GM10248 (cell line): ENCODE measurements at regions of chr1 and their contacts with region 1.

Region 1: DNA sequence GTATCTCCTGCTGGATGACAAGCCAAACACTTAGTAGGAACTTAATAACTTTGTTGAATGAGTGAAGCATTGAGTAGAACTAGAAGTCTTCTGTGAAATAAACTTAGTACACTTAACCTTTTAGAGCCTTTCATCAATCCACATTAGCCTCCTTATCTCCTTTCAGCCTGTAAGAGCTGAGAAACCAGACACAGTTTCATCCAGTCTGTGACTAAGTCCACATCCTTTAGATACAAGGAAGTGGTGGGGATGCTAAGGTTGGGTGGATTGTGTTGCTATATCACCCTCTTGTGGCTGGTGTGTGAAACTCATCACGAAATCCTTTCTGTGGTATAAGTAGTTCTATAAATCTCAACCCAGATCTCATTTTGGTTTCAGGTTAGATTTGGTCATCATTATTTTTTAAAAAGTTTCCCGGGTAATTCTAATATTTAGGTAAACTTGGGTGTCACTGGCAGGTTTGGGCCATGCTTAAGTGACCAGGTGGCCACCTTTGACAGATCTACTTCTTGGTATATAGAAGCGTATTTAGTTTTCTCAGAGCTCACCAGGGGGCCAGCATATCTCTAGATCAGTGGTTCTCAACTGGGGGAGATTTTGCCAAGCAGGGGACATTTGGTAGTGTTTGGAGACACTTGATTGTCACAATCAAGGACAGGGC is 27.8 kb upstream of the CD84 start:
- DNase-seq: peak; percentile 57
- CTCF ChIP-seq: peak; percentile 64

Region 2: GRCh38 chr1:160307118-160307854 is 299.9 kb before region 1 on chr1:
- CTCF ChIA-PET with region 1: no interaction called
- POLR2A ChIA-PET with region 1: no interaction called
- DNase-seq: no peak
- CTCF ChIP-seq: no peak

Region 3: DNA sequence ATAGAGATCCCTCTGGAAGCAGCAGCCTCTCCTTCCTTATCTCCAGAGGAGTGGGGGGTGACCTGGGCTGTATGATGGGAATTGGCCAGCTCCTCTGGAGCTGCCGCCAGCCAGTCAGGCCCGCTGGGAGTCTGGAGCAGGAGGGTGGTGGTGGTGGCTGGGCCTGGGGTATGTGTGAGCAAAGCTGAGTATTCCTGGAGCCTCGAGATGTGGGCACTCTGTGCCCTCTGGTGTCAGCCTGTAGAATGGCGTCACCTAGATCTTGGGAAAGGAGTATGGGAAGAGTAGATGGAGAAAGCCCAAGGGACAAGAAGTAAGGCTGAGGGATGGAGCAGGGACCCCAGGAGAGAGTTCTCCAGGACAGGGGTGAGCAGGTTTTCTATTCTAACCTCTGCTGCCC is 190.8 kb before region 1 on chr1:
- CTCF ChIA-PET with region 1: interaction called, 12 read pairs
- POLR2A ChIA-PET with region 1: no interaction called
- DNase-seq: no peak
- CTCF ChIP-seq: peak; percentile 40

Region 4: GRCh38 chr1:160437432-160438316 is 169.5 kb before region 1 on chr1:
- CTCF ChIA-PET with region 1: interaction called, 114 read pairs
- POLR2A ChIA-PET with region 1: no interaction called
- DNase-seq: peak; percentile 28
- CTCF ChIP-seq: no peak

Region 5: GRCh38 chr1:160550572-160551034 is 56.5 kb before region 1 on chr1:
- CTCF ChIA-PET with region 1: interaction called, 95 read pairs
- POLR2A ChIA-PET with region 1: interaction called, 4 read pairs
- DNase-seq: no peak
- CTCF ChIP-seq: peak; percentile 34

Region 6: GRCh38 chr1:160567858-160568682 is 39.1 kb before region 1 on chr1:
- CTCF ChIA-PET with region 1: interaction called, 54 read pairs
- POLR2A ChIA-PET with region 1: no interaction called
- DNase-seq: no peak
- CTCF ChIP-seq: no peak

Region 7: DNA sequence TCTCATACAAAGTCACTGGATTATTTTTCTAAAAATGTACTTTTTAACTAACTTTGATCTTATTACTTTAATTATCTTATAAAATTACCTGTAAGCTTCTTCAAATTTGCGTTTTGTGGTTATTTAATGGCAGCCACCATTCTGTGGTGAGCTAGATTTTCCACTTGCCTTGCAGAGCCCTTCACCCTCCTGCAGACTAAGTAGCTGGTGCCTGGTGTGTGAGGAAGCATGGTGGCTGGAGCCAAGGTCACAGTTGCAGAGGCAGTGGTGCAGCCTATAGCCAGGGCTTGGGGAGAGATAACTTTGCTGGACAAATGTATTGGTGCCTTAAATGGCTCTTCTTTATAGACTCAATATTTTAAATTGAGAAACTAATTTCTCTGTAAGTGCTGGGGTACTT is 16.7 kb before region 1 on chr1:
- CTCF ChIA-PET with region 1: interaction called, 17 read pairs
- POLR2A ChIA-PET with region 1: no interaction called
- DNase-seq: no peak
- CTCF ChIP-seq: no peak